ENCODE measurements at regions of chr18 and their contacts with region 1.

Region 1: GRCh38 chr18:9153256-9153655 is 16.7 kb downstream of the ANKRD12 start:
- DNase-seq: no peak
- ATAC-seq: no peak
- H3K4me3 ChIP-seq: no peak overlapping the region
- H3K27ac ChIP-seq: no peak overlapping the region
- H3K4me1 ChIP-seq: peaks cover 2% of the 10 kb centered on the region; the same call in 1 of the 2 replicates
- H3K27me3 ChIP-seq: no peaks in the 10 kb centered on the region
- CTCF ChIP-seq: no peak
- POLR2A ChIP-seq: no peak
- RAD21 ChIP-seq: no peak

Region 2: DNA sequence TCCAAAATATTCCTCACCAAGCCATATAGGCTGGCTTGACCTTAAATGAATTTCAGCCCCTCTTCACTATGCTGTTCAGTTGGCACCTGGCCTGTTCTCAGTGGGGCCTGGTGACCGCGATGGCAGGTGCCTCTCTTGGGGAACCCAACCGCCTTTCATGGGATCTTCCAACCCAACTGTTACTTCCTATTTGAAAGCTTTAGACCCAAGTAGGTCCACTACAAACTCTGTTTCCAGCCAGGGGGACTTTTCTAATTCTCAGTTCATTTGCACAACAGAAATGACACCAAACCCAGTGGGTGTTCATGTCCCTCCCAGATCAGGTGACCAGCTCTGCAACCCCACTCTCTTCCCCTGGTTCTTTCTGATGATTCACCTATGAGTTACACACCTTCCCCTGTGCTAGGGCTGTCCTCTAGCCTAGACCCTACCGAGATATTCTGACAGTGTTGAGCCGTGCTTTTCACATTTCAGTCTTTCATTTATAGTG is 86.4 kb before region 1 on chr18:
- CTCF ChIA-PET with region 1: no interaction called
- POLR2A ChIA-PET with region 1: no interaction called
- dilution Hi-C with region 1: no loop called
- in situ Hi-C with region 1: loop called (anchors 5 kb)
- intact Hi-C with region 1: no loop called
- DNase-seq: no peak
- ATAC-seq: no peak
- H3K4me3 ChIP-seq: no peak overlapping the region
- H3K27ac ChIP-seq: no peak overlapping the region
- H3K4me1 ChIP-seq: peaks cover 2% of the 10 kb centered on the region; the same call in 1 of the 2 replicates
- H3K27me3 ChIP-seq: no peaks in the 10 kb centered on the region
- CTCF ChIP-seq: no peak
- POLR2A ChIP-seq: no peak
- RAD21 ChIP-seq: no peak

Region 3: DNA sequence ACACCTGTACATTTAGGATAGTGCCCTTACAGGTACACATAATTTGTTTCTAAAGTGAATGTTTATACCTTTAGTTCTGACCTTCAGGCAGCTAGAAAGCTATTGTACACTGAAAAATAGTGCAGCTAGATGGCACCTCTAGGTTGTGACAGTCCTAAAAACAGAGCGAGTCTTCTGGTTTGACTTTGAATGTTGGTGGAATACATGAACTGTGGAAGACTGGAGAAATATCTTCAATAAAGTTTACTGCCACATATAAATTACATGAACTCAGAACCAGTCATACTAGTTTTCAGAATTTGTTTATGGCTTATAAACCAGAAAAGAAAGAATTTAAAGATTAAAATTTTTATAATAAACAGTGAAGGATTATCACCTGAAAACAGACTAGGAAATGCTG is 122.6 kb after region 1 on chr18:
- CTCF ChIA-PET with region 1: no interaction called
- POLR2A ChIA-PET with region 1: no interaction called
- dilution Hi-C with region 1: no loop called
- in situ Hi-C with region 1: no loop called
- intact Hi-C with region 1: no loop called
- DNase-seq: no peak
- ATAC-seq: no peak
- H3K4me3 ChIP-seq: no peak overlapping the region
- H3K27ac ChIP-seq: no peak overlapping the region
- H3K4me1 ChIP-seq: no peaks in the 10 kb centered on the region
- H3K27me3 ChIP-seq: no peaks in the 10 kb centered on the region
- CTCF ChIP-seq: no peak
- POLR2A ChIP-seq: no peak
- RAD21 ChIP-seq: no peak

Region 4: GRCh38 chr18:9417073-9417841 is 264.0 kb after region 1 on chr18:
- CTCF ChIA-PET with region 1: no interaction called
- POLR2A ChIA-PET with region 1: no interaction called
- dilution Hi-C with region 1: no loop called
- in situ Hi-C with region 1: no loop called
- intact Hi-C with region 1: no loop called
- DNase-seq: peak; percentile 56
- ATAC-seq: peak; percentile 86
- H3K4me3 ChIP-seq: no peak overlapping the region
- H3K27ac ChIP-seq: peak overlapping the region; percentile 50; the same call in 1 of the 2 replicates
- H3K4me1 ChIP-seq: peaks cover 11% of the 10 kb centered on the region
- H3K27me3 ChIP-seq: no peaks in the 10 kb centered on the region
- CTCF ChIP-seq: no peak
- POLR2A ChIP-seq: no peak
- RAD21 ChIP-seq: no peak

Measured in IMR-90 (cell line).